Thyroid gland (tissue), 4 donors: ENCODE measurements at regions of chr6 and their contacts with region 1.

Region 1: GRCh38 chr6:56451165-56451739 is 191.4 kb downstream of the DST start:
- DNase-seq: peak; percentile 82 to 90
- H3K4me3 ChIP-seq: no peak overlapping the region
- H3K27ac ChIP-seq: no peak overlapping the region
- H3K4me1 ChIP-seq: peaks cover 5% of the 10 kb centered on the region in 2 donors
- H3K27me3 ChIP-seq: no peaks in the 10 kb centered on the region
- CTCF ChIP-seq: no peak
- POLR2A ChIP-seq: no peak

Region 2: GRCh38 chr6:56370561-56371211 is 80.6 kb before region 1 on chr6:
- intact Hi-C with region 1: loop called (anchors 10 kb)
- DNase-seq: peak; percentile 59 to 60
- H3K4me3 ChIP-seq: no peak overlapping the region
- H3K27ac ChIP-seq: peak overlapping the region; percentile 75 to 85 (median 80)
- H3K4me1 ChIP-seq: peaks cover 19 to 44% of the 10 kb centered on the region in 2 donors
- H3K27me3 ChIP-seq: no peaks in the 10 kb centered on the region
- CTCF ChIP-seq: no peak
- POLR2A ChIP-seq: no peak

Region 3: GRCh38 chr6:56851541-56852259 is 400.4 kb after region 1 on chr6:
- intact Hi-C with region 1: no loop called
- DNase-seq: peak; percentile 13 to 28
- H3K4me3 ChIP-seq: peak overlapping the region in 1 of 3 donors; percentile 10
- H3K27ac ChIP-seq: peak overlapping the region in 1 of 3 donors; percentile 23
- H3K4me1 ChIP-seq: no peaks in the 10 kb centered on the region
- H3K27me3 ChIP-seq: no peaks in the 10 kb centered on the region
- CTCF ChIP-seq: peak in 5 of 6 experiments; percentile 20 to 83 (median 60)
- POLR2A ChIP-seq: no peak